Sciatic nerve (tissue), 2 donors: ENCODE measurements at regions of chr3 and their contacts with region 1.

Region 1: DNA sequence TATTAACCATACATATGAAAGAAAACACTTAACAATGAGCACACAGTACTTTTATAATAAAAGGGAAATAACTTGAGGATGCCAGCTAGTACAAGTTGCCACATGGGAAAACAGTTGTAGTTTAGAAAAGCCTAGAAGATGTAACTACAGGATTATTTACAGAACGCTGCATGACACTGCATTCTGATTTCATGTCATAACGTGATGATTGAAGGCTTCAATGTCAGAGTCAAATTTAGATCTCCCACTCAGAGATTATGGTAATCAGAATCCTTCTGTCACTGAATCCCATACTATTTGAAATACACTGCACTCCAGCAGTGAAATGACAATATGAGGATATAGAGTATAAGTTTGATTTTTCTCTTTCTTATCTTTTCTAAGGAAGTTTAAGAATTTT is 253.9 kb upstream of the LRRN1 start:
- DNase-seq: no peak
- ATAC-seq: no peak

Region 2: GRCh38 chr3:3447641-3448040 is 97.7 kb before region 1 on chr3:
- intact Hi-C with region 1: loop called (anchors 10 kb)
- DNase-seq: no peak
- ATAC-seq: no peak